ENCODE measurements at regions of chrX and their contacts with region 1.

Region 1: DNA sequence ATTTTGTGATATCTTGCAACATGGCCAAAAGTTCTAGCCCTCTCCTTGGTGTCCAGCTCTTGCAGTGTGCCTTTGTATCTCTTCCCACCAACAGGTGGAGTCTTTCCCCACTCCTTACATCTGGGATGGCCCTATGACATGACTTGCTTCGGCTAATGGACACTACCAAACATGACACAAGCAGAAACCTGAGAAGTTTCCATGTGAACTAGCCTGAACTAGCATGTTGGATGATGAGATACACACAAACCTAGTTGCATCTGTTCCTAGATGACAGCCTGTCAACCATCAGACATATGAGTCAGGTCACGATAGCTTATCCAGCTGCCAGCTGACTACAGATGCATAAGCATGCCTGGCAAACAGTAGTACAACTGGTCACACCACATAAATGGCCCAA is 207.5 kb upstream of the FTHL17 start:
- DNase-seq: peak; percentile 42
- H3K4me3 ChIP-seq: no peak overlapping the region
- H3K27ac ChIP-seq: no peak overlapping the region
- H3K4me1 ChIP-seq: no peaks in the 10 kb centered on the region
- H3K27me3 ChIP-seq: no peaks in the 10 kb centered on the region
- CTCF ChIP-seq: peak; percentile 71 to 72

Region 2: GRCh38 chrX:31136144-31136611 is 143.2 kb before region 1 on chrX:
- CTCF ChIA-PET with region 1: no interaction called
- dilution Hi-C with region 1: no loop called
- in situ Hi-C with region 1: no loop called
- intact Hi-C with region 1: no loop called
- DNase-seq: no peak
- H3K4me3 ChIP-seq: no peak overlapping the region
- H3K27ac ChIP-seq: no peak overlapping the region
- H3K4me1 ChIP-seq: no peaks in the 10 kb centered on the region
- H3K27me3 ChIP-seq: no peaks in the 10 kb centered on the region
- CTCF ChIP-seq: no peak

Region 3: GRCh38 chrX:31154946-31155345 is 124.4 kb before region 1 on chrX:
- CTCF ChIA-PET with region 1: no interaction called
- dilution Hi-C with region 1: no loop called
- in situ Hi-C with region 1: no loop called
- intact Hi-C with region 1: no loop called
- DNase-seq: no peak
- H3K4me3 ChIP-seq: no peak overlapping the region
- H3K27ac ChIP-seq: no peak overlapping the region
- H3K4me1 ChIP-seq: no peaks in the 10 kb centered on the region
- H3K27me3 ChIP-seq: no peaks in the 10 kb centered on the region
- CTCF ChIP-seq: no peak

Region 4: GRCh38 chrX:31423609-31424189 is 144.3 kb after region 1 on chrX:
- CTCF ChIA-PET with region 1: no interaction called
- dilution Hi-C with region 1: no loop called
- in situ Hi-C with region 1: no loop called
- intact Hi-C with region 1: loop called (anchors 2 kb)
- DNase-seq: peak; percentile 20
- H3K4me3 ChIP-seq: no peak overlapping the region
- H3K27ac ChIP-seq: no peak overlapping the region
- H3K4me1 ChIP-seq: no peaks in the 10 kb centered on the region
- H3K27me3 ChIP-seq: no peaks in the 10 kb centered on the region
- CTCF ChIP-seq: peak; percentile 51 to 54

Region 5: GRCh38 chrX:31658360-31658759 is 379.0 kb after region 1 on chrX:
- CTCF ChIA-PET with region 1: no interaction called
- dilution Hi-C with region 1: no loop called
- in situ Hi-C with region 1: no loop called
- intact Hi-C with region 1: loop called (anchors 1 kb)
- DNase-seq: no peak
- H3K4me3 ChIP-seq: no peak overlapping the region
- H3K27ac ChIP-seq: no peak overlapping the region
- H3K4me1 ChIP-seq: no peaks in the 10 kb centered on the region
- H3K27me3 ChIP-seq: peaks cover 9% of the 10 kb centered on the region
- CTCF ChIP-seq: peak; percentile 53 to 73